ENCODE measurements at regions of chr7 and their contacts with region 1.

Region 1: GRCh38 chr7:23055582-23056178 is 41.8 kb upstream of the HYCC1 start:
- DNase-seq: peak; percentile 76
- ATAC-seq: peak; percentile 95
- H3K4me3 Mint-ChIP-seq: no peak overlapping the region
- H3K27ac Mint-ChIP-seq: no peak overlapping the region
- H3K4me1 Mint-ChIP-seq: peaks cover 13% of the 10 kb centered on the region
- H3K27me3 Mint-ChIP-seq: no peaks in the 10 kb centered on the region

Region 2: DNA sequence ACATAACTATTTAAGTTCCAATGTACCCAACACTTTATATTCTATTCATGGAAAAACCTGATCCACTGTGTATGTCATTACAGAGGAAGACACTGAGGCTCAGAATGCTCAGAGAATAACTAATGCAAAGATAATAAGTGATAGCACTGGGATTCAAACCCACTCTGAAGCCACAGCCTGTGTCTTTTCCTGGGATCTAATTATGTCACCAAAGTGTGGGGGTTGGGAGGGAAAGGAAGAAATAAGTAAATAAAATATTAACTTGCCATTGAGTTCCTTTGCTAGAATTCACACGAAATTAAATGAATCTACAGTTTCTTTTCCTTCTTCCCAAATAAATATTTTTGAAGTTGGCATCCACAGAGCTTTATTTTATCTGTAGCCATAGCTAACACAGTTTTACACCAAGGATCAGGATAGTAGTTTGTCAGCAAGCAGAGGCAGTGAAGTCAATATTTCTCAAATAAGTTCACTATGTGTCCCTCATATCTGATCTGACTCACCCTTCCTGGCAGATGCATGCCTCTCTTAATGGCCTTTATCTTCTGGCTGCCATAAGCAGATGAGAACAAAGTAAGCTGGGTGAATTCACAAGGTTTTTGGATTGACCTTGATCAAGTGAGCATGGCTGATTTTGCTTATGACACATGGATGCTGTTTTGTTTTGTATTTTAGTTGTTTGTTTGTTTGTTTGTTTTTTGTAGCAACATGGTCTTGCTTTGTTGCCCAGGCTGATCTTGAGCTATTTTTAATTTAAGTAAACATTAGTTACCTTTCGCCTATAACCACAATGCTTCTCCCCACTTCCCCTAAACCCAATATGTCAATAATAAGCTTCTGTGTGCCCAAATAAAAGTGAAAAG is 705.0 kb before region 1 on chr7:
- CTCF ChIA-PET with region 1: no interaction called
- DNase-seq: no peak
- ATAC-seq: no peak
- H3K4me3 Mint-ChIP-seq: no peak overlapping the region
- H3K27ac Mint-ChIP-seq: no peak overlapping the region
- H3K4me1 Mint-ChIP-seq: peaks cover 2% of the 10 kb centered on the region
- H3K27me3 Mint-ChIP-seq: peaks cover 63% of the 10 kb centered on the region

Region 3: GRCh38 chr7:22726345-22727185 is 329.1 kb before region 1 on chr7:
- CTCF ChIA-PET with region 1: interaction called, 25 read pairs
- DNase-seq: peak; percentile 74
- ATAC-seq: peak; percentile 92
- H3K4me3 Mint-ChIP-seq: no peak overlapping the region
- H3K27ac Mint-ChIP-seq: no peak overlapping the region
- H3K4me1 Mint-ChIP-seq: peaks cover 30% of the 10 kb centered on the region
- H3K27me3 Mint-ChIP-seq: peaks cover 67% of the 10 kb centered on the region

Region 4: DNA sequence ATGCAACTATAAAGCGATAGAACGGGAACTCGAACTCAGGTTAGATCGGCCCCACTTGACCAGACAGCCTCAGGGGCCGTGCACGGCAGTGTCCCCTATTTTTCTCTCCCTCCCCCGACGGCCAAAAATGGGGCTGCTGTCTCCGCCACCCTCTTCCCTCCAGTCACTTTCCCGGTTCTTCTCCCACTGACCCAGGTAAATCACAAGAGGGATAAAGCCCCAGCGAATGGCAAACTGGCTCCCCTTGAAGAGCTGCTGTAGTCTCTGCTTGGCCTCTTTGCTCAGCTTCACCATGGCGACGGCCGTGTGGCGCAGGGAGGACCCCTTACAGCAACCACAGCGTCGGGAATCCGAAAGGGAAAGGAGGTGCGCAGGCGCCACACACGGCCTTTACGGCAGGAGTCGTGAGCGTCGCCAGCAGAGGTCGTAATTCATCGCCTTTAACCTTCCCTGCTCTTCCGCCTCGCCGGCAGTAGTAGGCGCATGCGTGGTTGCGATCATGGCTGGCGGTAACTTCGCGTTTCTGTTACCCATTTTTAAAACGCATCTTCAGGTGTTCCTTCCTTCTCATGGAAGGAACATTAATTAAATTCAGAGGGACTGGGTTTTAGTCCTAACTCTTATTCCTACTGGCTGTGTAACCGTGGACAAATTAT is 233.1 kb before region 1 on chr7 and contains the start of gene TOMM7:
- CTCF ChIA-PET with region 1: interaction called, 15 read pairs
- DNase-seq: peak; percentile 92
- ATAC-seq: peak; percentile 90
- H3K4me3 Mint-ChIP-seq: peak within 1 kb of the TSS; percentile 99
- H3K27ac Mint-ChIP-seq: peak within 1 kb of the TSS; percentile 96
- H3K4me1 Mint-ChIP-seq: peaks cover 41% of the 10 kb centered on the region
- H3K27me3 Mint-ChIP-seq: peaks cover 16% of the 10 kb centered on the region
- total RNA-seq, gene TOMM7: 199 to 229 TPM

Region 5: DNA sequence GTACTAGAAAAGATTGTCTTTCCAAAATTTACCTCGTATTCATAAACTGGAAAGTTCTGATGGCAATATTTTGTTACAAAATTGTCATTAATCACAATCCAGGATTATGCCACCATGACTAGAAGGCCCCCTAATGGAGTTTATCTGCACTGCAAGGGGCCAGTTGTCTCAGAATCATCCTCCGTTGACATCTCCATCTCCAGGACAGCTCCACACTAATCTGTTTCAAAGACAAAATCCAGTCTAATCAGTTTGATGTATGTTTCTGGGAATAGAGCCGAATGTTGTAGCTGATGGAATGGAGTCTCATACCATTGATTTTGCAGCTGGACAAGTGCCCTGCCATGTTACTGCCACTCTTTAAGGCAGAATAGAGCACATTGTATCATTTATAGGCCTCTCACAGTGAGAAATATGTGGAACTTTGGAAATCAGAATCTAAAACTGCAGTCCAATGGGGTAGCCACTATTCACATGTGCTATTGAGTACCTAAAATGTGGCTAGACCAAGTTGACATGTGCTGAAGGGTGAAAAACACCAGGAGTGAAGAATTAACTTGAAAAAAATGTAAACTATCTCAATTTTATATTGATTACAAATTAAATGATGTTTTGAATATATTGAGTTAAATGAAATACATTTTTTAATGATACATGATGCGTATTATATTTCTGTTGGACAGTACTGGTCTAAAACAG is 194.7 kb before region 1 on chr7:
- CTCF ChIA-PET with region 1: interaction called, 16 read pairs
- DNase-seq: no peak
- ATAC-seq: peak; percentile 41
- H3K4me3 Mint-ChIP-seq: no peak overlapping the region
- H3K27ac Mint-ChIP-seq: no peak overlapping the region
- H3K4me1 Mint-ChIP-seq: peaks cover 35% of the 10 kb centered on the region
- H3K27me3 Mint-ChIP-seq: no peaks in the 10 kb centered on the region

Region 6: DNA sequence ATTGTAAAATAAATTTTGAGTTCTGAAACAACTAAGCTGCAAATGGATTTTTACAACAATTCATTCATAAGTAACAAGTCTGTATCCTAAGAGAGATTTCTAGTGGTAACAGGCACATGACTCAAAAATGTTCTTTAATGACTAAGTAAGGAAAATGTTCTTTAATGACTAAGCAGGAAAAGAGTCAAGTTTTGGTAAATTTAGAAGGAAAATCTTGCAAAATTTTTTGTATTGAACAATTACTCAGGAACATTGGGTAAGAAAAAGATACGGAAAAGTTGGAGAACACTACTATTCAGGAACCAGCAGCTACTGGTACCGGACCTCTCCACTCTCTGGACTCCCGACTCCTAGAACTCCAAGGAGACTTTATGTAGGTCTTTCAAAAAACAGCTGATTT is 75.3 kb before region 1 on chr7:
- CTCF ChIA-PET with region 1: no interaction called
- DNase-seq: no peak
- ATAC-seq: no peak
- H3K4me3 Mint-ChIP-seq: no peak overlapping the region
- H3K27ac Mint-ChIP-seq: no peak overlapping the region
- H3K4me1 Mint-ChIP-seq: no peaks in the 10 kb centered on the region
- H3K27me3 Mint-ChIP-seq: no peaks in the 10 kb centered on the region

Region 7: GRCh38 chr7:23043441-23043840 is 12.2 kb before region 1 on chr7:
- CTCF ChIA-PET with region 1: interaction called, 11 read pairs
- DNase-seq: no peak
- ATAC-seq: peak; percentile 39
- H3K4me3 Mint-ChIP-seq: no peak overlapping the region
- H3K27ac Mint-ChIP-seq: no peak overlapping the region
- H3K4me1 Mint-ChIP-seq: peaks cover 7% of the 10 kb centered on the region
- H3K27me3 Mint-ChIP-seq: peaks cover 2% of the 10 kb centered on the region

Region 8: DNA sequence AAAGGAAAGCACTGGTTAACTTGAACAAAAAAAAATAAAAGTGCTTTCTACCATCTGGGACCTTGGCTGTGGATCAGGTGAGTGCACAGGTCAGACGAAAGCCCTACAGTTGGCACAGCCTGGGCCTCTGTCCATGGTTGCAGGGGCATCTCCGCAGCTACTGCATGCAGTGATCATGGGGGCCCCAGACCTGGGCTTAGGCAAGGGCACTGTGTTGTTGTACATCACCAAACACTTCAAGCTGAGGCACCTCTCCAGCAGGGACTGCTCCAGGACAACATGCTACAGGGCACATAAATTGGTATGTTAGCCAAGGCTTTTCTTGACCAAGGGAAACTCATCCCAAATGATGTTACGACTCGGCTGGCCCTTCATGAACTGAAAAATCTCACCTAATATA is 73.4 kb after region 1 on chr7:
- CTCF ChIA-PET with region 1: no interaction called
- DNase-seq: no peak
- ATAC-seq: no peak
- H3K4me3 Mint-ChIP-seq: no peak overlapping the region
- H3K27ac Mint-ChIP-seq: no peak overlapping the region
- H3K4me1 Mint-ChIP-seq: peaks cover 2% of the 10 kb centered on the region
- H3K27me3 Mint-ChIP-seq: no peaks in the 10 kb centered on the region

Region 9: DNA sequence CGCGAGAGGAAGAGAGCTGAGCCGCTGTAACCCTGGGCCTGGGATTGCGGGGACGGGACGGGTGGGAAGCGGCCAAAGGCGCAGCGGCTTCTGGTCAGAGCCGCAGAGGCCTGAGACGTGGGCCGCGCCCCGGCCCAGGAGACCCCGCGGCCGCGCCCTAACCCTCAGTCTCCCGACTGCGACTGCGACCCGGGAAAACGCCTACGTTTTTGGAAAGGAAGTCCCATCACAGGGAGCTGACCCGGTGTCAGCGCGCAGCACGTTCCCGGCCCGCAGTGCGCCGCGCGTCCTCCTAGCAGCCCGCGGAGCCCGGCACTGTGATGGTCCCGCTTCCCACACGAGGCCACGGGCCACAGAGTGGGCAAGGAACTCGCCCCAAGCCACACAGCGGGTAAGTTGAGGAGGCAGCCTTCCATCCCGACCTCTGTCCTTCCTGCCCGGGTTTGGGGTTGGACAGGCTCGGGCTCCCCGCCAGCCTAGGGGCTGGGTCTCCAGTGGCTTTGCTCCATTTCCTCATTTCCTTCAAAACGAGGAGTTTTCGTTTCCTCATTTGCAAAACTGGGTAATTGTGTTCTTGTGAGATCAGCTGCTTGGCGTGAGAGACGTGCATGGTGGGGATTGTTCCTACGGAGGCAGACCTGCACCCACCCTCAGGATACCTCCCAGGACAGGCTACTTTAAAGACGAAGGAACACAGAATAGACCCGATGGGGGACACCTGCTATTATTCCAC is 192.1 kb after region 1 on chr7:
- CTCF ChIA-PET with region 1: no interaction called
- DNase-seq: no peak
- ATAC-seq: peak; percentile 20
- H3K4me3 Mint-ChIP-seq: no peak overlapping the region
- H3K27ac Mint-ChIP-seq: no peak overlapping the region
- H3K4me1 Mint-ChIP-seq: peaks cover 3% of the 10 kb centered on the region
- H3K27me3 Mint-ChIP-seq: peaks cover 87% of the 10 kb centered on the region